Mammary epithelial cell (primary cell): ENCODE measurements at regions of chr19 and their contacts with region 1.

Region 1: GRCh38 chr19:53195265-53195903 is 2.2 kb upstream of the ZNF665 start:
- DNase-seq: peak; percentile 74
- H3K4me3 ChIP-seq: no peak overlapping the region
- H3K27ac ChIP-seq: no peak overlapping the region
- H3K4me1 ChIP-seq: no peaks in the 10 kb centered on the region
- H3K27me3 ChIP-seq: no peaks in the 10 kb centered on the region
- CTCF ChIP-seq: peak; percentile 87 to 94

Region 2: GRCh38 chr19:53254411-53255341 is 59.3 kb after region 1 on chr19 and contains the start of gene ZNF677:
- CTCF ChIA-PET with region 1: no interaction called
- dilution Hi-C with region 1: no loop called
- in situ Hi-C with region 1: no loop called
- intact Hi-C with region 1: no loop called
- DNase-seq: peak; percentile 80
- H3K4me3 ChIP-seq: peak within 1 kb of the TSS; percentile 68 to 77 (median 76)
- H3K27ac ChIP-seq: no peak within 1 kb of the TSS
- H3K4me1 ChIP-seq: no peaks in the 10 kb centered on the region
- H3K27me3 ChIP-seq: no peaks in the 10 kb centered on the region
- CTCF ChIP-seq: no peak
- total RNA-seq, gene ZNF677: 14.0 to 29.3 TPM

Region 3: DNA sequence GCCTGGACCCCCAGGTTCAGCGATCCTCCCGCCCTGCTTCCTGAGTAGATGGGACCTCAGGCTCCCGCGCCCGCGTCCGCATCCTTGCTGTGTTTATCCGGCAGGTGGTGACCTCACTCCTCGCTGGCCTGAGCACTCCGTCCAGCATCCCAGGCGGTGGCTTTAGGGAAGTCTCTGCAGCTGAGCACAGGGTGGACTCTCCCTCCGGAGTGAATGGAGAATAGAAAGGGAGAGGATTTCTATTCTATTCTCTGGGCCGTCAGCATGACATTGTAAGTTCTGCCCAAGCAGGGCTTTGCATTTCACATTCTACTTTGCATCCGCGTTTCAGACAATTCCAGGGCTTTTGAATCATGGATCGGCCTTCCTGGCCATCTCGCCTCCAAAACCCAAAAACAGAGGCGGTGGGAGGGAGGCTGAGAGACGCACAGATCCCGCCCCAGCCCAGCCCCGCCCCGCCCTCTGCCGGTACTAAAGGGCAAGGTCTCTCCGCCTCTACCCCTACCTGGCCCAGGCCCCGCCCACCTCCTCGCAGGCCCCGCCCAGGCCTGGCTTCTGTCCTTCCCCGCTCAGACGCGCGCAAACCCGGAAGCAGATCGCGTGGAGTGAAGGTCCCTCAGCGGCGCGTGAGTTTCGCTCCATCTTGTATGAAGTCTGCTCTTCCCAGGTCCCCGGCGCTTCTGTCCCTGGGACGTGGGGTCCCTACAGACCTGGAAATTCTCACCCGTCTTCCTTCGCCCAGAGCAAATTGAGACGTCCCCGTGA is 169.9 kb after region 1 on chr19 and contains the start of gene ZNF525:
- CTCF ChIA-PET with region 1: interaction called, 3 read pairs
- dilution Hi-C with region 1: no loop called
- in situ Hi-C with region 1: loop called in 1 of 2 experiments (anchors 25 kb)
- intact Hi-C with region 1: loop called (anchors 5 kb)
- DNase-seq: peak; percentile 89
- H3K4me3 ChIP-seq: peak within 1 kb of the TSS; percentile 75 to 99 (median 79)
- H3K27ac ChIP-seq: peak within 1 kb of the TSS; percentile 88
- H3K4me1 ChIP-seq: peaks cover 4% of the 10 kb centered on the region
- H3K27me3 ChIP-seq: no peaks in the 10 kb centered on the region
- CTCF ChIP-seq: peak in 1 of 2 donors; percentile 11
- total RNA-seq, gene ZNF525: 11.7 to 15.1 TPM

Region 4: DNA sequence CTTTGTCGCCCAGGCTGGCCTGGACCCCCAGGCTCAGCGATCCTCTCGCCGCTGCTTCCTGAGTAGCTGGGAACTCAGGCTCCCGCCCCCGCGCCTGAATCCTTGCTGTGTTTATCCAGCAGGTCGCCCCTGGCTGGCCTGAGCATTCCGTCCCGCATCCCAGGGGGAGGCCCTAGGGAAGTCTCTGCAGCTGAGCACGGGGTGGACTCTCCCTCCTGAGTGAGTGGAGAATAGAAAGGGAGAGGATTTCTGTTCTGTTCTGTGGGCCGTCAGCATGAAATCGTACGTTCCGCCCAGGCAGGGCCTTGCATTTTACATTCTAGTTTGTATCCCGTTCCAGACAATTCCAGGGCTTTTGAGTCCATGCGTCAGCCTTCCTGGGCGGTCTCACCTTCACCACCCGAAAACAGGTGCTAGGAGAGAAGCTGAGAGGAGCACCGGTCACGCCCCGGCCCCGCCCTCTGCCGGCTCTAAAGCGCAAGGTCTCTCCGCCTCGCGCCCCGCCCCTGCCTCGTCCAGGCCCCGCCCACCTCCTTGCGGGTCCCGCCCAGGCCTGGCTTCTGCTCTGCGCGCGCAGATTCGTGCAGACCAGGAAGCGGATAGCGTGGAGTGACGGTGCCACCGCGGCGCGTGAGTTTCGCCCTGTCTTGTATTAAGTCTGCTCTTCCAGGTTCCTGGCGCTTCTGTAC is 236.2 kb after region 1 on chr19 and contains the start of gene ZNF761:
- CTCF ChIA-PET with region 1: no interaction called
- dilution Hi-C with region 1: no loop called
- in situ Hi-C with region 1: no loop called
- intact Hi-C with region 1: loop called (anchors 5 kb)
- DNase-seq: peak; percentile 97
- H3K4me3 ChIP-seq: peak within 1 kb of the TSS; percentile 77 to 96 (median 91)
- H3K27ac ChIP-seq: peak within 1 kb of the TSS; percentile 94
- H3K4me1 ChIP-seq: peaks cover 7% of the 10 kb centered on the region
- H3K27me3 ChIP-seq: no peaks in the 10 kb centered on the region
- CTCF ChIP-seq: peak in 1 of 2 donors; percentile 33
- total RNA-seq, gene ZNF761: 10.3 to 11.0 TPM

Region 5: DNA sequence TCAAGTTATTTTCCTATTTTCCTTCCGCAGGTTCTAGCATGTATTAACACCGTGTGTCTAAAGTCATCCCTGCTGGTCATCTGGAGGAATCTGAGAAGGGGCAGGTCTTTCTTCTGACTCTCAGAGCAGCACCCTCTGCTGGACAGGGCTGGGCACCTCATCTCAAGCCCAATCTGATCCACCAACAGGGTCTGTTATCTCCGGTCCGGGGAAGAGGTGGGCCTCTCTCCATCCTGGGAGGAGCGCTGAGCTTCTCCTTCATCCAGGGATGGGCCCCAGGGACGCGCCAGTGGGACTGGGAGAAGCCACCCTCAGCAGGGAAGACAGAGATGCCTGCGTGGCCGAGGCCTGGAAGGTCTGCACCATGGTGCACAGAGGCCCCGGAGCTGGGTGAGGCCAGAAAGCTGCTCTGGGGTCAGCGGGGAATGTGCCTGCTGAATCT is 316.6 kb after region 1 on chr19:
- CTCF ChIA-PET with region 1: no interaction called
- dilution Hi-C with region 1: no loop called
- in situ Hi-C with region 1: no loop called
- intact Hi-C with region 1: loop called (anchors 5 kb)
- DNase-seq: peak; percentile 43
- H3K4me3 ChIP-seq: no peak overlapping the region
- H3K27ac ChIP-seq: no peak overlapping the region
- H3K4me1 ChIP-seq: no peaks in the 10 kb centered on the region
- H3K27me3 ChIP-seq: no peaks in the 10 kb centered on the region
- CTCF ChIP-seq: peak; percentile 33 to 65

Region 6: DNA sequence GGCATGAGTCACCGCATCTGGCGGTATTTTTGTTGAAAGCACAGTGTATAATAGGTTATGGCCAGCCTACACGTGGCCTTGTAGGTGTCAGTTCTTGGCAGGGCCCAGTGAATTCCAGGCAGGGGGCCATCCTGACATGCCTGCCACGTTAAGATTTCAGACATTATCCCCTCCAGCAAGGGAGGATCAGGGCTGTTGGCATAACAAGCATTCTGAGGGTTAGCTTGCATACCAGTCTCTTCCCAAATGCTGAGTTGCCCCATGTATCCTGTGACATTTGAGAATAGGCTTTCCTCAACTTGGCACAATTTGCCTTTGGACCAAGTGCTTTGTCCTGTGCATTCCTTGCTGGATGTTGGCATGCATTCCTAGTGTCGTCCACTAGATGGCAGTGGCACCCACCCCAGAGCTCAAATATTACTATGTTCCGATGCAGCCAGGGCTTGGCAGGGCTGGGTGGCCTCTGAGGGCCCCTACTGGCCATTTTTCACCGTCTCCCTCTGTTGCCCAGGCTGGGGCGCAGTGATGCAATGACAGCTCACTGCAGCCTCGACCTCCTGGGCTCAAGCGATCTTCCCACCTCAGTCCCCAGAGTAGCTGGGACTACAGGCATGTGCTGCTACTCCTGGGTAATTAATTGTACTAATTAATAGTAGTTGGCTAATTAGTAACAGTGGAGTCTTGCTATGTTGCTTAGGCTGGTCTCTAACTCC is 597.5 kb after region 1 on chr19:
- CTCF ChIA-PET with region 1: no interaction called
- dilution Hi-C with region 1: no loop called
- in situ Hi-C with region 1: no loop called
- intact Hi-C with region 1: loop called (anchors 1 kb)
- DNase-seq: peak; percentile 78
- H3K4me3 ChIP-seq: no peak overlapping the region
- H3K27ac ChIP-seq: no peak overlapping the region
- H3K4me1 ChIP-seq: no peaks in the 10 kb centered on the region
- H3K27me3 ChIP-seq: no peaks in the 10 kb centered on the region
- CTCF ChIP-seq: peak; percentile 83 to 90